ENCODE measurements at regions of chr20 and their contacts with region 1.

Region 1: DNA sequence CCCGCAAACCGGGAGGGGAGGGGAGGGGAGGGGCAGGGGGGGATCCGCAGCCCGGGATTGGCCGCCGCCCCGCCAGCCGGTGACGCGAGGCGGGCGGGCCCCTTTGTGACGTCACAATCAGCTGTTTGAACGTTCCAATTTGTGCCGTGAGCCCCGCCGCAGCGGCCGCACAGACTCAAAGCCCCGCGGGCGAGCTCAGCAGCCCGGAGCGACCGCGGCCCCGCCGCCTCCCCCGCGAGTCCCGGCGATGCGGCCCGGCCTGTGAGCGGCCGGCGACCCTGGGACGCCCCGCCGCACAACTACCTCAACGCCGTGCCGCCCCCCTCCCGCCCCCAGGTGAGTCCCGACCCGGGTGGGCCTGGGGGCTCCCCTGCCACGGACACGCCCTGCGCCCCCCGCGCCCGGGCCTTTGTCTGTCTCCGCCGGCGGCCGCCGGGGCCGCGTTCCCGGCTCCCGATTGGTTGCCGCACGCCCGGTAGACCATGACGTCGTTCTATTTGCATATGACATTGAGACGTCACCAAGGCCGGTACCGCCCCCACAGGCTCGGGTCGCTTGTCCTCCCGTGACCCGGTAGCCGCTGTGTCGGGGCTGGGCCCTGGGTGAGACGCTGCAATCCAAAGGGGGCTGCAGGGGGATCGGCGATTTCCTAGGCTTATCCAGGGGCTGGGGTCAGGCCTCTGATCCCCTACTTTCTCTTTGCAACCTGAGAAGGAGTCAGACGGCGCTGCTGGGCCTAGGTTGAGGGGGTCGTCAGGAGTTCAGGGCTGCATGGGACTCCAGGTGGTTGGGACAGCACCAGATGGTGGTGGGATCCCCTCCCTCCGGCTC is at the start of gene TP53INP2:
- DNase-seq: no peak
- ATAC-seq: peak; percentile 79
- H3K4me3 ChIP-seq: peak within 1 kb of the TSS; percentile 64 to 87
- H3K27ac ChIP-seq: peak within 1 kb of the TSS; percentile 78
- H3K4me1 ChIP-seq: peaks cover 8% of the 10 kb centered on the region
- H3K27me3 ChIP-seq: no peaks in the 10 kb centered on the region
- CTCF ChIP-seq: no peak
- total RNA-seq, gene TP53INP2: 20.6 TPM

Region 2: GRCh38 chr20:34538671-34539123 is 165.7 kb before region 1 on chr20:
- CTCF ChIA-PET with region 1: interaction called, 5 read pairs
- POLR2A ChIA-PET with region 1: no interaction called
- in situ Hi-C with region 1: no loop called
- intact Hi-C with region 1: loop called (anchors 2 kb)
- DNase-seq: no peak
- ATAC-seq: peak; percentile 64; the same call in 1 of the 2 replicates
- H3K4me3 ChIP-seq: no peak overlapping the region
- H3K27ac ChIP-seq: no peak overlapping the region
- H3K4me1 ChIP-seq: no peaks in the 10 kb centered on the region
- H3K27me3 ChIP-seq: no peaks in the 10 kb centered on the region
- CTCF ChIP-seq: peak; percentile 94

Region 3: GRCh38 chr20:34562643-34563042 is 141.7 kb before region 1 on chr20:
- CTCF ChIA-PET with region 1: no interaction called
- POLR2A ChIA-PET with region 1: no interaction called
- in situ Hi-C with region 1: no loop called
- intact Hi-C with region 1: loop called (anchors 10 kb)
- DNase-seq: no peak
- ATAC-seq: no peak
- H3K4me3 ChIP-seq: no peak overlapping the region
- H3K27ac ChIP-seq: no peak overlapping the region
- H3K4me1 ChIP-seq: peaks cover 3% of the 10 kb centered on the region; the same call in 1 of the 2 replicates
- H3K27me3 ChIP-seq: no peaks in the 10 kb centered on the region
- CTCF ChIP-seq: no peak; the same call in 1 of the 2 replicates

Region 4: DNA sequence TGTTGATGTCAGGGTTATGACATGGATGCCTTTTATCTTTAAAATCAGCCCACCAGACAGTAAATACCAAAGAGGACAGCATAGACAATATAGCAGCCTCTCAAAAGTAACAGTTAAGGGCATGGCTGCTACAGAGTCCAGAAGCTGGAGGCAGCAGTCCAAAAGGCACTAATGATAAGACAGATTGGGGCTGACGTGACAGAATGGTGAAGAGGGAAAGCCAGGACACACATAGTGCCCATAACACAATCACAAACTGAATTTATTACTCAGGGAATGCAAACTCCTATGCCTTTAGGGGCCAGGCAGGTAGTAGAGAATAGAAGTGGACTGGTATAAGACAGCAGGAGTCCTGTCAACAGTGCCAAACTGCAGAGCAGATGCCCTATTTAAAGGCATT is 40.5 kb after region 1 on chr20:
- CTCF ChIA-PET with region 1: no interaction called
- POLR2A ChIA-PET with region 1: no interaction called
- in situ Hi-C with region 1: no loop called
- intact Hi-C with region 1: no loop called
- DNase-seq: no peak
- ATAC-seq: no peak
- H3K4me3 ChIP-seq: no peak overlapping the region
- H3K27ac ChIP-seq: no peak overlapping the region
- H3K4me1 ChIP-seq: no peaks in the 10 kb centered on the region
- H3K27me3 ChIP-seq: no peaks in the 10 kb centered on the region
- CTCF ChIP-seq: no peak

Region 5: GRCh38 chr20:34825530-34826362 is 121.4 kb after region 1 on chr20 and contains the start of gene NCOA6:
- CTCF ChIA-PET with region 1: no interaction called
- POLR2A ChIA-PET with region 1: no interaction called
- in situ Hi-C with region 1: no loop called
- intact Hi-C with region 1: no loop called
- DNase-seq: peak; percentile 41
- ATAC-seq: peak; percentile 88
- H3K4me3 ChIP-seq: peak within 1 kb of the TSS; percentile 86 to 96
- H3K27ac ChIP-seq: peak within 1 kb of the TSS; percentile 92
- H3K4me1 ChIP-seq: peaks cover 4% of the 10 kb centered on the region; the same call in 1 of the 2 replicates
- H3K27me3 ChIP-seq: no peaks in the 10 kb centered on the region
- CTCF ChIP-seq: no peak
- total RNA-seq, gene NCOA6: 28.9 TPM